ENCODE measurements at regions of chr17 and their contacts with region 1.

Region 1: GRCh38 chr17:7572588-7573323 is 6.7 kb upstream of the CD68 start:
- DNase-seq: peak; percentile 99 to 100
- ATAC-seq: peak; percentile 79 to 93 (median 80)
- H3K4me3 ChIP-seq: peak overlapping the region; percentile 93
- H3K4me3 Mint-ChIP-seq: peak overlapping the region; percentile 99
- H3K27ac ChIP-seq: peak overlapping the region; percentile 96
- H3K27ac Mint-ChIP-seq: peak overlapping the region; percentile 98 to 100
- H3K4me1 ChIP-seq: peaks cover 30% of the 10 kb centered on the region
- H3K4me1 Mint-ChIP-seq: peaks cover 43 to 47% of the 10 kb centered on the region in 2 donors
- H3K27me3 ChIP-seq: no peaks in the 10 kb centered on the region
- H3K27me3 Mint-ChIP-seq: no peaks in the 10 kb centered on the region
- CTCF ChIP-seq: no peak

Region 2: DNA sequence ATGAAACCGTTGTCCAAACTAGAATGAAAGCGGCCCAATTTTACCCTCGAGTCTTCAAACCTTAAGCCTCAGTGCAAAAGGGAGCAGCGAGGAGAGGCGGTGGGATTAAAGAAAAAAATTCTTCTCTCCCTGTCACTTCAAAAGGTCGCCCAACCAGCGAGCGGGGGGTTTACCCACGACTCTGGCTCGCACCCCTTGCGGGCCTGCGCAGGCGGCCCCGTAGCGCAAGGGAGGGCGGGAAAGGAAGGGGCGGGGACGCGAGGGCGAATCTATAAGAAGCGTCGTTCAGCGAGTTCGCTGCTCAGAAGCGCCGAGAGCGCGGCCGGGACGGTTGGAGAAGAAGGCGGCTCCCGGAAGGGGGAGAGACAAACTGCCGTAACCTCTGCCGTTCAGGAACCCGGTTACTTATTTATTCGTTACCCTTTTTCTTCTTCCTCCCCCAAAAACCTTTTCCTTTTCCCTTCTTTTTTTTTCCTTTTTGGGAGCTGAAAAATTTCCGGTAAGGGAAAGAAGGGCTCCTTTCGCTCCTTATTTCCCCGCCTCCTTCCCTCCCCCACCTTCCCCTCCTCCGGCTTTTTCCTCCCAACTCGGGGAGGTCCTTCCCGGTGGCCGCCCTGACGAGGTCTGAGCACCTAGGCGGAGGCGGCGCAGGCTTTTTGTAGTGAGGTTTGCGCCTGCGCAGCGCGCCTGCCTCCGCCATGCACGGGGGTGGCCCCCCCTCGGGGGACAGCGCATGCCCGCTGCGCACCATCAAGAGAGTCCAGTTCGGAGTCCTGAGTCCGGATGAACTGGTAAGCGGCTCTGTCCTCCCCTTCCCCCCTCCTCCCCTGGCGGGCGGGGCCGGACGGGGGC is 88.5 kb before region 1 on chr17 and contains the start of gene POLR2A:
- intact Hi-C with region 1: loop called (anchors 2 kb)
- DNase-seq: peak; percentile 99
- ATAC-seq: peak; percentile 63 to 83 (median 66)
- H3K4me3 ChIP-seq: peak within 1 kb of the TSS; percentile 81
- H3K4me3 Mint-ChIP-seq: peak within 1 kb of the TSS; percentile 100
- H3K27ac ChIP-seq: peak within 1 kb of the TSS; percentile 96
- H3K27ac Mint-ChIP-seq: peak within 1 kb of the TSS; percentile 100
- H3K4me1 ChIP-seq: peaks cover 50% of the 10 kb centered on the region
- H3K4me1 Mint-ChIP-seq: peaks cover 72 to 84% of the 10 kb centered on the region in 2 donors
- H3K27me3 ChIP-seq: no peaks in the 10 kb centered on the region
- H3K27me3 Mint-ChIP-seq: no peaks in the 10 kb centered on the region
- CTCF ChIP-seq: no peak
- total RNA-seq, gene POLR2A: 515 to 879 (median 524) TPM

Region 3: DNA sequence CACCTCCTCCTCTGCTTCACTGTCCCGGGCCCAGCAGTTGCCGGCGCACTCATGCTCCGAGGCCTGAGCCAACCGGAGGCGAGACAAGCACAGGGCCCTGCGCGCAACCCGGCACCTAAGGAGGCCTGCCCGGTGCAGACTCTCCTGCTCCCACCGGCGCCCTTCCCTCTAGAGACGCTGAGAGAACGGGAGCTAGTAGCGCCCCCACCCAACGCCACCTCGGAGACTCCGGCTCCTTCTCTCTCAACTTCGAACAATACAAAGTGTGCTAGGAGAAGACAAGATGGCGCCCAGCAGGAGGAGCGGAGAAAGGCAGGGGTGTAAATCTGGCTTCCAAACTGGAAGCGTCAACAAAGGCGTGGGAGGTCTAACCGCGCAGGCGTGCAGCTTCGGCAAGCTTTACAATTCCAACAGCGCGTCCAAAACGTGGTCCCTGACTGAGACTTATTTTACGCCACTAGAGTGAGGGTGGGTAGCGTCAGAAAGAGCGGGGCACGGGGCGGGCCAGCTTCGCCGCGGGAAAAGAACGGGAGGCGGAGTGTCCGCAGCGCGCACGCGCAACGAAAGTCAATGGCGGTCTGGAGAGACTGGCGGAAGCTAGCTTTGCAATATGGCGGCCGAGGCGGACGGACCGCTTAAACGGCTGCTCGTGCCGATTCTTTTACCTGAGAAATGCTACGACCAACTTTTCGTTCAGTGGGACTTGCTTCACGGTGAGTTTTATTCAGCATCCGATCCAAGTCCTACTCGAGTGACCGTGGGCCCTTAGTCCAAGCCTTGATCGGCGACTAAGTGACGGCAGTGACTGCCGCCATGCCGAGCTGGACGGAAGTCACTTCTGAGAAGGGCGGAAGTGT is 10.7 kb after region 1 on chr17 and contains the start of gene MPDU1:
- intact Hi-C with region 1: loop called (anchors 1 kb)
- DNase-seq: peak; percentile 93 to 98
- ATAC-seq: peak; percentile 80 to 93 (median 83)
- H3K4me3 ChIP-seq: peak within 1 kb of the TSS; percentile 69
- H3K4me3 Mint-ChIP-seq: peak within 1 kb of the TSS; percentile 96
- H3K27ac ChIP-seq: peak within 1 kb of the TSS; percentile 88
- H3K27ac Mint-ChIP-seq: peak within 1 kb of the TSS; percentile 98 to 99
- H3K4me1 ChIP-seq: peaks cover 57% of the 10 kb centered on the region
- H3K4me1 Mint-ChIP-seq: peaks cover 38 to 55% of the 10 kb centered on the region in 2 donors
- H3K27me3 ChIP-seq: no peaks in the 10 kb centered on the region
- H3K27me3 Mint-ChIP-seq: no peaks in the 10 kb centered on the region
- CTCF ChIP-seq: no peak
- total RNA-seq, gene MPDU1: 26.3 to 29.2 (median 27.1) TPM

Region 4: GRCh38 chr17:7614422-7615264 is 41.9 kb after region 1 on chr17 and contains the start of gene FXR2:
- intact Hi-C with region 1: loop called (anchors 2 kb)
- DNase-seq: peak; percentile 95 to 99
- ATAC-seq: peak; percentile 86 to 95 (median 87)
- H3K4me3 ChIP-seq: peak within 1 kb of the TSS; percentile 79
- H3K4me3 Mint-ChIP-seq: peak within 1 kb of the TSS; percentile 96
- H3K27ac ChIP-seq: peak within 1 kb of the TSS; percentile 72
- H3K27ac Mint-ChIP-seq: peak within 1 kb of the TSS; percentile 94 to 95
- H3K4me1 ChIP-seq: peaks cover 17% of the 10 kb centered on the region
- H3K4me1 Mint-ChIP-seq: peaks cover 29 to 48% of the 10 kb centered on the region in 2 donors
- H3K27me3 ChIP-seq: no peaks in the 10 kb centered on the region
- H3K27me3 Mint-ChIP-seq: no peaks in the 10 kb centered on the region
- CTCF ChIP-seq: peak; percentile 51
- total RNA-seq, gene FXR2: 23.7 to 40.2 (median 29.5) TPM

Measured in natural killer cell (primary cell).